Esophagus muscularis mucosa (tissue), 4 donors: ENCODE measurements at regions of chr6 and their contacts with region 1.

Region 1: GRCh38 chr6:111011360-111012142 is 29.7 kb downstream of the RPF2 start:
- DNase-seq: no peak
- H3K4me3 ChIP-seq: no peak overlapping the region
- H3K27ac ChIP-seq: no peak overlapping the region
- H3K4me1 ChIP-seq: peaks cover 0 to 14% (median 6%) of the 10 kb centered on the region in 4 donors
- H3K27me3 ChIP-seq: no peaks in the 10 kb centered on the region
- CTCF ChIP-seq: peak; percentile 43 to 59 (median 50)
- EP300 ChIP-seq: no peak
- POLR2A ChIP-seq: no peak

Region 2: GRCh38 chr6:111057074-111057752 is 45.7 kb after region 1 on chr6:
- intact Hi-C with region 1: no loop called
- DNase-seq: no peak
- H3K4me3 ChIP-seq: no peak overlapping the region
- H3K27ac ChIP-seq: no peak overlapping the region
- H3K4me1 ChIP-seq: no peaks in the 10 kb centered on the region
- H3K27me3 ChIP-seq: peaks cover 0 to 3% (median 0%) of the 10 kb centered on the region in 4 donors
- CTCF ChIP-seq: peak; percentile 54 to 67 (median 61)
- EP300 ChIP-seq: no peak
- POLR2A ChIP-seq: no peak

Region 3: GRCh38 chr6:111210194-111210728 is 198.7 kb after region 1 on chr6:
- intact Hi-C with region 1: loop called (anchors 5 kb)
- DNase-seq: no peak
- H3K4me3 ChIP-seq: no peak overlapping the region
- H3K27ac ChIP-seq: no peak overlapping the region
- H3K4me1 ChIP-seq: peaks cover 0 to 4% (median 0%) of the 10 kb centered on the region in 4 donors
- H3K27me3 ChIP-seq: no peaks in the 10 kb centered on the region
- CTCF ChIP-seq: peak; percentile 68 to 77 (median 72)
- EP300 ChIP-seq: no peak
- POLR2A ChIP-seq: no peak

Region 4: GRCh38 chr6:111230351-111231089 is 219.0 kb after region 1 on chr6:
- intact Hi-C with region 1: no loop called
- DNase-seq: no peak
- H3K4me3 ChIP-seq: no peak overlapping the region
- H3K27ac ChIP-seq: no peak overlapping the region
- H3K4me1 ChIP-seq: peaks cover 0 to 28% (median 11%) of the 10 kb centered on the region in 4 donors
- H3K27me3 ChIP-seq: no peaks in the 10 kb centered on the region
- CTCF ChIP-seq: no peak
- EP300 ChIP-seq: no peak
- POLR2A ChIP-seq: no peak